Esophagus muscularis mucosa (tissue), 4 donors: ENCODE measurements at regions of chr20 and their contacts with region 1.

Region 1: GRCh38 chr20:19284400-19285178 is 72.1 kb downstream of the SLC24A3 start:
- DNase-seq: no peak
- H3K4me3 ChIP-seq: no peak overlapping the region
- H3K27ac ChIP-seq: peak overlapping the region in 3 of 4 donors; percentile 15 to 50 (median 24)
- H3K4me1 ChIP-seq: peaks cover 4 to 42% (median 37%) of the 10 kb centered on the region in 4 donors
- H3K27me3 ChIP-seq: no peaks in the 10 kb centered on the region
- CTCF ChIP-seq: no peak
- EP300 ChIP-seq: no peak
- POLR2A ChIP-seq: no peak

Region 2: GRCh38 chr20:19212821-19213502 is 71.6 kb before region 1 on chr20:
- intact Hi-C with region 1: loop called (anchors 10 kb)
- DNase-seq: no peak
- H3K4me3 ChIP-seq: peak overlapping the region; percentile 62 to 76 (median 63)
- H3K27ac ChIP-seq: peak overlapping the region; percentile 35 to 69 (median 59)
- H3K4me1 ChIP-seq: peaks cover 4 to 35% (median 27%) of the 10 kb centered on the region in 4 donors
- H3K27me3 ChIP-seq: peaks cover 0 to 14% (median 0%) of the 10 kb centered on the region in 4 donors
- CTCF ChIP-seq: peak; percentile 43 to 58 (median 44)
- EP300 ChIP-seq: no peak
- POLR2A ChIP-seq: no peak